CD4-positive, alpha-beta memory T cell (primary cell): ENCODE measurements at regions of chr17 and their contacts with region 1.

Region 1: DNA sequence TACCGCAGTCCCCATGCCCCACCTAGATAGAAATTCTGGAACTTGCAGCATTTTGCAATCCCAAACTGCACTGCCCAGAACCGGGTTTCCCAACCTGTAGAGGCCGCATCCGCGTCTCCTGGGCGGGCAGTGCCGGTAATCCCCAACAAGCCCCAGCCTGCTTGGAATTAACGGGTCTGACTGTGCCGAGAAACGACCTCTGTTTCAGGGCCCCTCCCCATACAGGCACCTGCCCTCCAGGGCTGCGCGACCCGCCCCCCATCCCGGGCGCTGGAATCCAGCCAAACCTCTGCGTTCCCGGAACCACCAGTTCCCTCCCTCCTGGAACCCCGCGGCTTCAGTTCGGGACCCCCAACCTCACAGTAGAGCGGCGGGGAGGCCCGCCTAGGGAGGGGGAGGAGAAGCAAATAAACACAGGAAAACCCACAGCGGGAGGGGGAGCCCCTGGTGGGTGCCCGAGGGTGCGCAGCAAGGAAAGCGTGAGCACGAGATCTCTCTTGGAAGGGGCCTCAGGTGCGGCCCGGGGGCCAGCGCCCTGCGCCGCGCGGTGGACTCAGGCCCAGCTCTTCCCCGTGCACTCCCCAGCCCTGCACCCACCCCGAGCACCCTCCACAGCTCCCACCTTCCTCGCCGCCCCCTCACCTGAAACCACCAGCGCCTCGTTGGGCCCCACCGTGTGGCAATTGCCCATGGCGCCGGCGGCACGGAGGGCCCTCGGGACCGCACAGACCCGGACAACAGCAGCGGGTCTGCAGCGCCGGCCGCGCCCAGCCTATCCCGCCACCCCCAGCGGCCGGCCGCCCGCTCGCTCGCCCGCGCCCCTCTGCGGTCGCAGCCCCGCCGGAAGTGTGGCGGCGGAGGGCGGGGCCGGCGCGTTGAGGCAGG is at the start of gene FLOT2:
- DNase-seq: peak; percentile 65 to 81 (median 74)
- H3K4me3 ChIP-seq: peak within 1 kb of the TSS; percentile 86 to 90
- H3K4me3 Mint-ChIP-seq: peak within 1 kb of the TSS; percentile 91 to 98 (median 96)
- H3K27ac ChIP-seq: peak within 1 kb of the TSS; percentile 88
- H3K27ac Mint-ChIP-seq: peak within 1 kb of the TSS; percentile 95 to 100 (median 96)
- H3K4me1 ChIP-seq: peaks cover 73% of the 10 kb centered on the region
- H3K4me1 Mint-ChIP-seq: peaks cover 47 to 83% (median 65%) of the 10 kb centered on the region in 4 donors
- H3K27me3 ChIP-seq: no peaks in the 10 kb centered on the region
- H3K27me3 Mint-ChIP-seq: no peaks in the 10 kb centered on the region
- total RNA-seq, gene FLOT2: 216 to 224 TPM

Region 2: GRCh38 chr17:28717578-28718333 is 179.4 kb before region 1 on chr17 and contains the start of gene RAB34:
- CTCF ChIA-PET with region 1: interaction called, 5 read pairs
- POLR2A ChIA-PET with region 1: interaction called, 14 read pairs
- intact Hi-C with region 1: no loop called
- DNase-seq: no peak
- H3K4me3 ChIP-seq: no peak within 1 kb of the TSS
- H3K4me3 Mint-ChIP-seq: peak within 1 kb of the TSS; percentile 49 to 71 (median 53)
- H3K27ac ChIP-seq: no peak within 1 kb of the TSS
- H3K27ac Mint-ChIP-seq: peak within 1 kb of the TSS in 5 of 7 donors; percentile 52 to 96 (median 74)
- H3K4me1 ChIP-seq: peaks cover 38% of the 10 kb centered on the region
- H3K4me1 Mint-ChIP-seq: peaks cover 24 to 46% (median 35%) of the 10 kb centered on the region in 4 donors
- H3K27me3 ChIP-seq: peaks cover 11% of the 10 kb centered on the region
- H3K27me3 Mint-ChIP-seq: peaks cover 9 to 18% of the 10 kb centered on the region in 2 donors
- total RNA-seq, gene RAB34: 4.0 to 6.3 TPM

Region 3: GRCh38 chr17:28849281-28849680 is 47.8 kb before region 1 on chr17:
- CTCF ChIA-PET with region 1: interaction called, 14 read pairs
- POLR2A ChIA-PET with region 1: interaction called, 3 read pairs
- intact Hi-C with region 1: no loop called
- DNase-seq: no peak
- H3K4me3 ChIP-seq: no peak overlapping the region
- H3K4me3 Mint-ChIP-seq: no peak overlapping the region
- H3K27ac ChIP-seq: no peak overlapping the region
- H3K27ac Mint-ChIP-seq: no peak overlapping the region
- H3K4me1 ChIP-seq: peaks cover 3% of the 10 kb centered on the region
- H3K4me1 Mint-ChIP-seq: peaks cover 0 to 3% (median under 1%) of the 10 kb centered on the region in 4 donors
- H3K27me3 ChIP-seq: no peaks in the 10 kb centered on the region
- H3K27me3 Mint-ChIP-seq: no peaks in the 10 kb centered on the region

Region 4: GRCh38 chr17:28871056-28871579 is 26.0 kb before region 1 on chr17:
- CTCF ChIA-PET with region 1: interaction called, 10 read pairs
- POLR2A ChIA-PET with region 1: interaction called, 27 read pairs
- intact Hi-C with region 1: loop called (anchors 2 kb)
- DNase-seq: peak in 4 of 5 donors; percentile 23 to 40 (median 38)
- H3K4me3 ChIP-seq: no peak overlapping the region
- H3K4me3 Mint-ChIP-seq: peak overlapping the region in 6 of 8 donors; percentile 21 to 71 (median 63)
- H3K27ac ChIP-seq: peak overlapping the region; percentile 22
- H3K27ac Mint-ChIP-seq: peak overlapping the region; percentile 33 to 99 (median 94)
- H3K4me1 ChIP-seq: peaks cover 16% of the 10 kb centered on the region
- H3K4me1 Mint-ChIP-seq: peaks cover 5 to 16% (median 11%) of the 10 kb centered on the region in 4 donors
- H3K27me3 ChIP-seq: no peaks in the 10 kb centered on the region
- H3K27me3 Mint-ChIP-seq: no peaks in the 10 kb centered on the region

Region 5: GRCh38 chr17:28916302-28916934 is 19.3 kb after region 1 on chr17:
- CTCF ChIA-PET with region 1: interaction called, 8 read pairs
- POLR2A ChIA-PET with region 1: interaction called, 45 read pairs
- intact Hi-C with region 1: no loop called
- DNase-seq: peak; percentile 40 to 59 (median 45)
- H3K4me3 ChIP-seq: no peak overlapping the region
- H3K4me3 Mint-ChIP-seq: no peak overlapping the region
- H3K27ac ChIP-seq: no peak overlapping the region
- H3K27ac Mint-ChIP-seq: peak overlapping the region in 6 of 7 donors; percentile 70 to 91 (median 82)
- H3K4me1 ChIP-seq: no peaks in the 10 kb centered on the region
- H3K4me1 Mint-ChIP-seq: peaks cover 0 to 6% (median 4%) of the 10 kb centered on the region in 4 donors
- H3K27me3 ChIP-seq: no peaks in the 10 kb centered on the region
- H3K27me3 Mint-ChIP-seq: no peaks in the 10 kb centered on the region

Region 6: GRCh38 chr17:29039764-29040598 is 142.9 kb after region 1 on chr17:
- CTCF ChIA-PET with region 1: no interaction called
- POLR2A ChIA-PET with region 1: no interaction called
- intact Hi-C with region 1: no loop called
- DNase-seq: no peak
- H3K4me3 ChIP-seq: no peak overlapping the region
- H3K4me3 Mint-ChIP-seq: no peak overlapping the region
- H3K27ac ChIP-seq: no peak overlapping the region
- H3K27ac Mint-ChIP-seq: no peak overlapping the region
- H3K4me1 ChIP-seq: no peaks in the 10 kb centered on the region
- H3K4me1 Mint-ChIP-seq: no peaks in the 10 kb centered on the region
- H3K27me3 ChIP-seq: no peaks in the 10 kb centered on the region
- H3K27me3 Mint-ChIP-seq: peaks cover 8 to 12% of the 10 kb centered on the region in 2 donors